CD14-positive monocyte (primary cell): ENCODE measurements at regions of chr17 and their contacts with region 1.

Region 1: DNA sequence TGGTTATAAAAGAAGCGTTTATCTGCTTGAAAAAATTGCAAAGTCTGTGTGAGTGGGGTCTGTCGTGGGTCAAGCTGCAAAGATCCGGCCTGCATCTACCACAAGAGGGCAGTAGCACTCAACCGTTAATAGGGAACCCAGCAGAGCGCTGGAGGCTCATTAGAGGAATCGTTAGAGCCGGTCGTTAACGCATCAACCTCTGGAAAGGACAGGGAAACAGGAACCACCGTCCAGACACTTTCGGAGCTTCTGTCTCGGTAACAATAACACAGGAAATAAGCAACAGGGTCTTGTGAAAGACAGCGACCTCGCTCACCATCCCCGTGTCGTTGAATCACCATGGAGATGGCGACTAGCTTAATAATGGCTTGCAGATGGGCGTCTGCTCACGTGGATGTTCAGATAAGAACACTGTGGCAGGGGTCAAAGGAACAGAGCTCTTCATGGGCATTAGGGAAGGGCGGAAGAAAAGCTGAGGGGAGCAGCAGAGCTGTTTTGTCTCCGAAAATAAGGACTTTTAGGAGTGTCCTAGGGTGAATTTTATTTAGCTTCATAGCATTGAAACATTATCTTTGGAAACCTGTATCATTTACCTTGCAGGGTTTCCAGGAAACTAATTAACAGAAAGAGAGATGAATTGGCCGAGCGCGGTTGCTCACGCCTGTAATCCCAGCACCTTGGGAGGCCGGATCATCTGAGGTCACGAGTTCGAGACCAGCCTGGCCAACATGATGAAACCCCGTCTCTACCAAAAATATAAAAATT is 11.9 kb upstream of the NSRP1 start:
- DNase-seq: peak; percentile 98 to 100 (median 100)
- H3K4me3 ChIP-seq: peak overlapping the region in 1 of 3 experiments; percentile 45
- H3K4me3 Mint-ChIP-seq: peak overlapping the region; percentile 44 to 83
- H3K27ac ChIP-seq: peak overlapping the region; percentile 64 to 88
- H3K27ac Mint-ChIP-seq: peak overlapping the region; percentile 94 to 98 (median 96)
- H3K4me1 ChIP-seq: peaks cover 12 to 21% of the 10 kb centered on the region in 2 donors
- H3K4me1 Mint-ChIP-seq: peaks cover 20% of the 10 kb centered on the region
- H3K27me3 ChIP-seq: no peaks in the 10 kb centered on the region
- H3K27me3 Mint-ChIP-seq: no peaks in the 10 kb centered on the region
- CTCF ChIP-seq: peak; percentile 90

Region 2: GRCh38 chr17:30116661-30117551 is 12.1 kb after region 1 on chr17 and contains the start of gene NSRP1:
- intact Hi-C with region 1: loop called in 1 of 2 experiments (anchors 1 kb)
- DNase-seq: peak; percentile 93 to 97 (median 96)
- H3K4me3 ChIP-seq: peak within 1 kb of the TSS; percentile 78 to 98 (median 92)
- H3K4me3 Mint-ChIP-seq: peak within 1 kb of the TSS; percentile 88 to 98
- H3K27ac ChIP-seq: peak within 1 kb of the TSS; percentile 95 to 100
- H3K27ac Mint-ChIP-seq: peak within 1 kb of the TSS; percentile 98 to 100 (median 100)
- H3K4me1 ChIP-seq: peaks cover 12 to 20% of the 10 kb centered on the region in 2 donors
- H3K4me1 Mint-ChIP-seq: peaks cover 19% of the 10 kb centered on the region
- H3K27me3 ChIP-seq: no peaks in the 10 kb centered on the region
- H3K27me3 Mint-ChIP-seq: no peaks in the 10 kb centered on the region
- CTCF ChIP-seq: no peak
- polyA plus RNA-seq, gene NSRP1: 7.2 to 19.9 (median 11.7) TPM

Region 3: GRCh38 chr17:30176855-30177254 is 72.1 kb after region 1 on chr17:
- intact Hi-C with region 1: loop called in 1 of 2 experiments (anchors 5 kb)
- DNase-seq: no peak
- H3K4me3 ChIP-seq: no peak overlapping the region
- H3K4me3 Mint-ChIP-seq: no peak overlapping the region
- H3K27ac ChIP-seq: peak overlapping the region in 1 of 2 donors; percentile 27
- H3K27ac Mint-ChIP-seq: peak overlapping the region in 1 of 7 donors; percentile 40
- H3K4me1 ChIP-seq: no peaks in the 10 kb centered on the region
- H3K4me1 Mint-ChIP-seq: no peaks in the 10 kb centered on the region
- H3K27me3 ChIP-seq: no peaks in the 10 kb centered on the region
- H3K27me3 Mint-ChIP-seq: peaks cover 0 to 2% (median 0%) of the 10 kb centered on the region in 3 donors
- CTCF ChIP-seq: no peak

Region 4: DNA sequence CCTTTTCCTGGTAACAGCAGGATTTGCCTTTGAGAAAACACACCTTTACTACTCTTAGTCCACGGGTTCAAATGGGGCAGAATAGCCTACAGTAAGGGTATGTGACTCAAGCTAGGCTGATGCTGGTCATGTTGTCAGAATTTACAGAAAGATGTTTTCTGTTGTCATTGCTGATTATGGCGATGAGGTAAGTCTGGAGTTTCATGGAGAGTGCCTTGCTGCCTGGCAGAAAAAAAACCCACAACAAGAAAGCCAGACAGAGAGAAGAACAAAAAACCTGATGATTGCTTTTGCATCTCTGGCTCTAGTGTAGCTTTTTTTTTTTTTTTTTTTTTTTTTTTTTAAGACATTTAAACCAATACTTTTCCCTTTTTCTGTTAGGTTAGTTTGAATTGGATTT is 82.8 kb after region 1 on chr17:
- intact Hi-C with region 1: no loop called
- DNase-seq: peak in 1 of 3 donors; percentile 39
- H3K4me3 ChIP-seq: no peak overlapping the region
- H3K4me3 Mint-ChIP-seq: no peak overlapping the region
- H3K27ac ChIP-seq: no peak overlapping the region
- H3K27ac Mint-ChIP-seq: peak overlapping the region in 1 of 7 donors; percentile 30
- H3K4me1 ChIP-seq: no peaks in the 10 kb centered on the region
- H3K4me1 Mint-ChIP-seq: no peaks in the 10 kb centered on the region
- H3K27me3 ChIP-seq: peaks cover 0 to 2% of the 10 kb centered on the region in 2 donors
- H3K27me3 Mint-ChIP-seq: peaks cover 5 to 9% (median 7%) of the 10 kb centered on the region in 3 donors
- CTCF ChIP-seq: no peak